Endothelial cell of umbilical vein (primary cell): ENCODE measurements at regions of chr1 and their contacts with region 1.

Region 1: GRCh38 chr1:59743324-59744091 is 71.2 kb upstream of the HOOK1 start:
- DNase-seq: peak; percentile 91
- H3K4me3 ChIP-seq: no peak overlapping the region
- H3K27ac ChIP-seq: peak overlapping the region; percentile 50
- H3K4me1 ChIP-seq: peaks cover 30% of the 10 kb centered on the region
- H3K27me3 ChIP-seq: no peaks in the 10 kb centered on the region
- CTCF ChIP-seq: no peak
- POLR2A ChIP-seq: no peak

Region 2: DNA sequence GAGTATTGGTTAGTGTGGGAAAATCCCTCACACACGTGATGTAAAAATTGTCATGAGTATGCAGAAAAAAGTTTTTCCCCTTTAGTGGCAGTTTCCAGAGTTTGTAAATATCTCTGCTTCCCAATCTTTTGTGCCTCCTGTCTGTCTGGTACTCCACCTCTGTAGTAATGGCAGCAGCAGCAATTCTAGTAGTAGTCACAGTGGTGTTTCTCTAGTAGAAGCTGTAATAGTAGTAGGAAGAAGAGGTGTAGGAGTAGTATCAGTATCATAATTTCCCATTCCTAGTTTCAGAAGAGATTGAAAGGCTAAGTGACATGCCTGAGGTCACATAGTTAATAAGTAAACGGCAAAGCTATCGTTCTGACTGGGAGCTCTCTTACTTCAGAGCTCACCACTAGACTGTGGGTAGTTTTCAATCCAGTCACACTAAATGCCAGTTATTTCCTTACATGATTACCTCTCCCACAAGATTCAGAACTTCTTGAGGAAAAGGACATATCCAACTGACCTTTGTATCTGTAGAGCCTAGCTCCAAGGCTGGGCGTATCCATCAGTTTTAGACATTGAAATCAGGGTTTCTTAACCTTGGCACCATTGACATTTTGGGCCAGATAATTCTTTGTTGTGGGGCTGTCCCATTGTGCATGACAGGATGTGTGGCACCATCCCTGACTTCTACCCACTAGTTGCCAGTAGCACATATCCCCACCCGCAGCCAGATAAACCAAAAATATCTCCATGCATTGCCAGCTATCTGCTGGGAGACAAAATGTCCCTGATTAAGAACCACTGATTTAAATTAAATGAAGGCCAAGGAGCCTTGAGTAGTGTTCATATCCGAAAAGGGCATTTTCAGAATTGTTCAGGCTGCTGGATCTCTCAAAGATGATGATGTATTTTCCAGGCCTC is 310.7 kb before region 1 on chr1:
- CTCF ChIA-PET with region 1: no interaction called
- POLR2A ChIA-PET with region 1: no interaction called
- dilution Hi-C with region 1: no loop called
- intact Hi-C with region 1: loop called (anchors 1 kb)
- DNase-seq: no peak
- H3K4me3 ChIP-seq: no peak overlapping the region
- H3K27ac ChIP-seq: no peak overlapping the region
- H3K4me1 ChIP-seq: no peaks in the 10 kb centered on the region
- H3K27me3 ChIP-seq: no peaks in the 10 kb centered on the region
- CTCF ChIP-seq: no peak
- POLR2A ChIP-seq: no peak

Region 3: GRCh38 chr1:59664166-59664565 is 79.3 kb before region 1 on chr1:
- CTCF ChIA-PET with region 1: no interaction called
- POLR2A ChIA-PET with region 1: no interaction called
- dilution Hi-C with region 1: no loop called
- intact Hi-C with region 1: no loop called
- DNase-seq: no peak
- H3K4me3 ChIP-seq: no peak overlapping the region
- H3K27ac ChIP-seq: no peak overlapping the region
- H3K4me1 ChIP-seq: no peaks in the 10 kb centered on the region
- H3K27me3 ChIP-seq: no peaks in the 10 kb centered on the region
- CTCF ChIP-seq: no peak
- POLR2A ChIP-seq: no peak

Region 4: DNA sequence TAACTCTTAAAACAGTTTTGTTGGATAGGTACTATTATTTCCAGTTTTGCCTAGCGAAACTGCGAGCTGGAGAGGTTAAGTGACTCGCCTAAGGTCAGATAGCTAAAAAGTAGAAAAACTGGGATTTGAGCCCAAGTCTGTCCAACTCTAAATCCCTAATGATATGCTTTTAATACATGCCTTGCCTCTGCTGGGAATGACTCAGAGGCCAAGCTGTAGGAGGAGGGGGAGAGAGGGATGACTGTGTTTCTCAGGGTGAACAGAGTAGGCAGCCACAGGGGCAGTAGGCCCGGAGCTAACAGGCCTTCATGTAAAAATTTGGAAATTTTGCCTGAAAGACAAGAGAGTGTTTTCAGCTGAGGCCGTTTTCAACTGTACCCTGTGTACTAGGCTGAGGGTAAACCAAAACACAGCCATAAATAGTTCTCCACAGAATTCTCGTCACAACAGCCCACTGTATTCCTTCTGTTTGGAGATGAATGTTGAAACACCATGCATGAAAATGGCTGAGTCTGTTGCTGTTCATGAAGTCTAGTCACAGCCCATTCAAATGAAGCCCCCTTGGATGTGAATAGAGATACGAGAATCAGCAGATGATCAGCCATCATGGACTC is 36.2 kb before region 1 on chr1:
- CTCF ChIA-PET with region 1: no interaction called
- POLR2A ChIA-PET with region 1: interaction called, 3 read pairs
- dilution Hi-C with region 1: no loop called
- intact Hi-C with region 1: loop called (anchors 2 kb)
- DNase-seq: peak; percentile 86
- H3K4me3 ChIP-seq: no peak overlapping the region
- H3K27ac ChIP-seq: no peak overlapping the region
- H3K4me1 ChIP-seq: peaks cover 12% of the 10 kb centered on the region
- H3K27me3 ChIP-seq: no peaks in the 10 kb centered on the region
- CTCF ChIP-seq: no peak
- POLR2A ChIP-seq: no peak

Region 5: DNA sequence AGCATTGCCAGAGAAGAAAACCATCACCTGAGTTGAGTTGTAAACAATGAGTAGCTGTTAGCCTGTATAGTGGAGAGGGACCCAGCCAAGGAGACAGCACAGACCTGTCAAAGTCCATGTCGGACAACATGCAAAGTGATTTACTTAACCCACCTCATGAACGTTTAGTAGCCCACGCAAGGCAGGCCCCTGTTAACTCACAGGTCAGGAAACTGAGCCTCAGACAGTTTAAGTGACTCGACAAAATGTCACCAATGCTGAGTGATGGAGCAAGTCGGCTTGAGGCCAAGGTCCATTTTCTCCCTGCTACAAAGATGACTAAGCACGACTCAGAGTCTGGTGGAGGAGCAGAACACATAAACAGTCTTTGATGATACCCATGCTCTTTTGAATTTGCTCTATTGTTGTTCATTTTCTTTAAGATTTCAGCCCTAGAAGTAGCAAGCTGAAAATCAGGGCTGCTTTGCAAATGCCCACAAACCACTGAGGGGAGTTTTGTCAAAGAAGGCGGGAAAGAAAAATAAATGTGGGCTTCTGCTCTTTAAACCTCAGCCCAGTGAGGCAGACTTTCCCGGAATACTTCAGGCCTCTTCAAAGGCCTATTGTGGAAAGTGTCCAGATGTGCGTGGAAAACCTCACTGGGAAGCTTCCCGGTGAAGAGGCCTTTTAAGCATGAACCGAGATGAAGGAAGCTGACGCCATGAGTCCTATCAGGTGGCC is 12.6 kb before region 1 on chr1:
- CTCF ChIA-PET with region 1: interaction called, 8 read pairs
- POLR2A ChIA-PET with region 1: no interaction called
- dilution Hi-C with region 1: no loop called
- intact Hi-C with region 1: loop called (anchors 1 kb)
- DNase-seq: peak; percentile 93
- H3K4me3 ChIP-seq: no peak overlapping the region
- H3K27ac ChIP-seq: peak overlapping the region; percentile 79
- H3K4me1 ChIP-seq: peaks cover 15% of the 10 kb centered on the region
- H3K27me3 ChIP-seq: no peaks in the 10 kb centered on the region
- CTCF ChIP-seq: no peak
- POLR2A ChIP-seq: peak; percentile 47

Region 6: GRCh38 chr1:59803458-59804038 is 60.0 kb after region 1 on chr1:
- CTCF ChIA-PET with region 1: no interaction called
- POLR2A ChIA-PET with region 1: no interaction called
- dilution Hi-C with region 1: no loop called
- intact Hi-C with region 1: no loop called
- DNase-seq: peak; percentile 70
- H3K4me3 ChIP-seq: no peak overlapping the region
- H3K27ac ChIP-seq: no peak overlapping the region
- H3K4me1 ChIP-seq: no peaks in the 10 kb centered on the region
- H3K27me3 ChIP-seq: peaks cover 0 to 4% of the 10 kb centered on the region in 2 experiments
- CTCF ChIP-seq: no peak
- POLR2A ChIP-seq: no peak